ENCODE measurements at regions of chr11 and their contacts with region 1.

Region 1: DNA sequence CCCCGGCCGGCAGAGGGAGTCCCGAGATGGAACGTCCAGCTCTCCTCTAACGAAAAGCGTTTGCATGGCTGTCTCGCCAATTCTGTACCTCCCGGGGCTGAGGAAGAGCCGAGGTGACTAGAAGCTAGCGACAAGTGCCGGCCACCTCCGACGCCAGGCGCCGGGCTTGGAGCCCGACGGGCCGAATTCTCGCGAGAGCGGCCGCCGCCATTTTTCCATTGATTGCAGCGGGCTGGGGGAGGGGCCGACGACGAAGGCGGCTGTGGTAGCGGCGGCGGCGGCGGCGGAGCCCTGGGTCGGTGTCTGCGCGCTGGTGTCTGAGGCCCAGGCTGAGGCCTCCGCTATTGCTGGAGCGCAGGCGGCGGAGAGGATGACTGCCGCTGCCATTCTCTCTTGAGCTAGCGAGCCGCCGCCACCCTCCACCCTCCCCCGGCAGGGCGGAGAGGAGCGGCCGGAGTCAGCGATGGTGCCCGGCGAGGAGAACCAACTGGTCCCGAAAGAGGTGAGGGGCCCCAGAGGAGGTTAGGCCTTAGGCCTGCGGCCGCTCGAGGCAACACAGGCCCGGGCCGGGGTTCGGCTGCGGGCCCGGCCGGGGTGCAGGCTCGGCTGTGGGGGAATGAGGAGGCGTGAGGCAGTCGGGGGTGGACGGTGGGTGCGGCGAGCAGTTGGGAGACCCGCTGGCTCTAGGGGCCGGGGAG is at the start of gene USP47:
- DNase-seq: peak; percentile 90 to 98 (median 95)
- ATAC-seq: peak; percentile 90
- H3K4me3 ChIP-seq: peak within 1 kb of the TSS; percentile 76
- H3K4me3 Mint-ChIP-seq: peak within 1 kb of the TSS in 1 of 10 donors; percentile 59
- H3K27ac ChIP-seq: peak within 1 kb of the TSS; percentile 100
- H3K27ac Mint-ChIP-seq: peak within 1 kb of the TSS in 1 of 9 donors; percentile 64
- H3K4me1 ChIP-seq: peaks cover 27 to 36% of the 10 kb centered on the region in 2 donors
- H3K4me1 Mint-ChIP-seq: peaks cover 0 to 25% (median 3%) of the 10 kb centered on the region in 7 donors
- H3K27me3 ChIP-seq: no peaks in the 10 kb centered on the region
- H3K27me3 Mint-ChIP-seq: peaks cover 0 to 17% (median 13%) of the 10 kb centered on the region in 5 donors
- total RNA-seq, gene USP47: 45.6 to 71.8 (median 59.1) TPM

Region 2: DNA sequence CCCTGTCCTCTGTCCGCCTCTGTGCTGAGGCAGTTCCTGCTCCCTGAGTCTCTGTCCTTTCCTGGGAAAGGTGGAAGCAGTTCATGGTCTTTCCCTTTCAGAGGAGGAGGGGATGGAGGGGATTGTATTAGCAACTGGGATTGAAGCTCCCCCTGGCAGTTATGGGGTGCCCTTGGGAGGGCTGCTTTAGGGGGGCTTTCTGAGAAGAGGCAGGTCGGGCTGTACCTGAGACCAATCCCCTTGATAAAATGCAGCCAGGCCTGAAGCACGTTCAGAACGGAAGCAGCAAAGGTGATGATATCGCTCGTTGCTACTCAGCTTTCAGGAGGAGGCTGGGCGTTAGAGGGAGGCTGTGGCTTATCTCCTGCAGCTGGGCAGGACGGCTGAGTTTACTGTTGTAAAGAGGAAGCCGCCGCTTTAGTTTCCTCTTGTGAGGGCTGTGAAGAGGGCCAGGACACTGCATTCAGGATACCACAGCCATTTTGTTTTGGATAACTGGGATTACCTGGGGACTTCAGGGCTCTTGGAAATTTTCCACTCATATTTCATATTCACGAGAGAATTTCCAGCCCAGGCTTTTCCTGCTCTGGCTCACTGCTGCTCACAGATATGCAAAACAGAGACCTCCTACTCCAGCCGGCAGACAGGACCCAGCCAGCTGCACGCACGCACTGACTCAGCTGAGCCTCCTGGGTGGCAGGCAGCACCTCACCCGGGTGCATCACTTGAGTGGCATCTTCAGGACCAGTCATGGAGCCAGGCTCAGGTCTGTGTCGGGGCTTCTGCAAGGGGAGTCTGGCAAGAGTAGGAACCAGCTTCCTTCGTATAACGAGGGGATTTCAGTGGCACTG is 1386.0 kb before region 1 on chr11:
- CTCF ChIA-PET with region 1: no interaction called
- POLR2A ChIA-PET with region 1: no interaction called
- intact Hi-C with region 1: loop called (anchors 5 kb)
- DNase-seq: peak; percentile 45 to 85 (median 77)
- ATAC-seq: peak; percentile 71
- H3K4me3 ChIP-seq: peak overlapping the region; percentile 55
- H3K4me3 Mint-ChIP-seq: peak overlapping the region; percentile 78 to 96 (median 92)
- H3K27ac ChIP-seq: peak overlapping the region; percentile 75
- H3K27ac Mint-ChIP-seq: peak overlapping the region; percentile 87 to 98 (median 94)
- H3K4me1 ChIP-seq: peaks cover 62 to 67% of the 10 kb centered on the region in 2 donors
- H3K4me1 Mint-ChIP-seq: peaks cover 72 to 92% (median 90%) of the 10 kb centered on the region in 7 donors
- H3K27me3 ChIP-seq: no peaks in the 10 kb centered on the region
- H3K27me3 Mint-ChIP-seq: peaks cover 0 to 9% (median 0%) of the 10 kb centered on the region in 5 donors

Region 3: GRCh38 chr11:10857709-10858438 is 984.0 kb before region 1 on chr11 and contains the start of gene ZBED5:
- CTCF ChIA-PET with region 1: interaction called, 3 read pairs
- POLR2A ChIA-PET with region 1: interaction called, 6 read pairs
- intact Hi-C with region 1: loop called (anchors 1 to 2 kb)
- DNase-seq: peak; percentile 93 to 97 (median 96)
- ATAC-seq: peak; percentile 94
- H3K4me3 ChIP-seq: peak within 1 kb of the TSS; percentile 91
- H3K4me3 Mint-ChIP-seq: peak within 1 kb of the TSS; percentile 94 to 100 (median 99)
- H3K27ac ChIP-seq: peak within 1 kb of the TSS; percentile 91
- H3K27ac Mint-ChIP-seq: peak within 1 kb of the TSS; percentile 98 to 100 (median 100)
- H3K4me1 ChIP-seq: peaks cover 5 to 9% of the 10 kb centered on the region in 2 donors
- H3K4me1 Mint-ChIP-seq: peaks cover 20 to 73% (median 60%) of the 10 kb centered on the region in 7 donors
- H3K27me3 ChIP-seq: no peaks in the 10 kb centered on the region
- H3K27me3 Mint-ChIP-seq: peaks cover 0 to 2% (median 0%) of the 10 kb centered on the region in 5 donors
- total RNA-seq, gene ZBED5: 56.7 to 146 (median 94.0) TPM

Region 4: DNA sequence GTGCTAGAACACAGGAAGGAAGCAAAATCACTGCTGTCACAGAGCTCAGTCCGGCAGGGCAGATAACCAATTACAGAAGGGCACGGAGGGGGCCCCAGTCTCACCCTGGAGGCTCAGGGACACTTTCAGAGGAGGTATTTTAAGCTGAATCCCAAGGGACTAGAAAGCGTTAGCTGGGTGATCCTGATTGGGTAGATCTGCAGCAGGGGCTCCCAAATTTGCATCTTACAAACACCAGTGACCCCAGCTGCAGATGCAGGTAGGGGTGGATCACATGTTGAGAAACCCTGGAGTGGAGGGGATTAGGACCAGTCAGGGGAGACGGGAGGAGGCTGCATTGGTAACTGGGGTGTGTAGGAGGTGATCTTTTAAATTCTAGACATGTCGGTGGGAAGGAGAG is 580.2 kb before region 1 on chr11:
- CTCF ChIA-PET with region 1: no interaction called
- POLR2A ChIA-PET with region 1: no interaction called
- intact Hi-C with region 1: no loop called
- DNase-seq: no peak
- ATAC-seq: no peak
- H3K4me3 ChIP-seq: no peak overlapping the region
- H3K4me3 Mint-ChIP-seq: no peak overlapping the region
- H3K27ac ChIP-seq: no peak overlapping the region
- H3K27ac Mint-ChIP-seq: no peak overlapping the region
- H3K4me1 ChIP-seq: no peaks in the 10 kb centered on the region
- H3K4me1 Mint-ChIP-seq: peaks cover 0 to 3% (median 0%) of the 10 kb centered on the region in 7 donors
- H3K27me3 ChIP-seq: no peaks in the 10 kb centered on the region
- H3K27me3 Mint-ChIP-seq: peaks cover 10 to 21% (median 17%) of the 10 kb centered on the region in 5 donors

Region 5: GRCh38 chr11:11798586-11799438 is 43.1 kb before region 1 on chr11:
- CTCF ChIA-PET with region 1: interaction called, 12 read pairs
- POLR2A ChIA-PET with region 1: no interaction called
- intact Hi-C with region 1: no loop called
- DNase-seq: peak; percentile 41 to 79 (median 66)
- ATAC-seq: peak; percentile 79
- H3K4me3 ChIP-seq: no peak overlapping the region
- H3K4me3 Mint-ChIP-seq: no peak overlapping the region
- H3K27ac ChIP-seq: no peak overlapping the region
- H3K27ac Mint-ChIP-seq: no peak overlapping the region
- H3K4me1 ChIP-seq: no peaks in the 10 kb centered on the region
- H3K4me1 Mint-ChIP-seq: no peaks in the 10 kb centered on the region
- H3K27me3 ChIP-seq: peaks cover 0 to 3% of the 10 kb centered on the region in 2 donors
- H3K27me3 Mint-ChIP-seq: peaks cover 18 to 33% (median 24%) of the 10 kb centered on the region in 5 donors

Region 6: DNA sequence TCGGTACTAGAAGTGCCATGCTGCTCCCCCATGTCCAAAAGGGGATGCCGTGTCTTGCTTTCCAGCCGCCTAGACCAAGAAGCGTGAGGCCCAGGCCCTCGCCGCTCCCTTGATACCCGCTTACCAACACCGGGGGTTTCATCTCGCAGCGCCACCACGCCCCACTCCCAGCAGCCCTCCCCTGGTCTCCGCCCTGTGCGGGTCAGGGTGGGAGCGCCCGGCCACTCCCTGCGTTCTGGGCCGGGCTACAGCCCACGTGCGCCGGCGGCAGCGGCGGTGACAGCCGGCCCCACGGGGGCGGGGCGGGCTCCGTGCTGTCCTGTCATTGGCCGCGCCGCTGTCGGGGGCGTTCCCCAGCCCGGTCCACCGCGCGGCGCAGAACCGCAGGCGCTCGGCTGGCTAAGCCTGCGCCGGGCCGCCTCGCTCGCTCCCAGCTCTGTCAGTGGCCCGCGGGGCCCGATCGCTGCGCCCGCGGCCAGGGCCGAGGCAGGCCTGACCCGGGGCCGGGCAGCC is 268.4 kb after region 1 on chr11 and contains the start of gene MICAL2:
- CTCF ChIA-PET with region 1: no interaction called
- POLR2A ChIA-PET with region 1: no interaction called
- intact Hi-C with region 1: loop called (anchors 2 to 5 kb)
- DNase-seq: peak; percentile 66 to 94 (median 76)
- ATAC-seq: peak; percentile 99
- H3K4me3 ChIP-seq: peak within 1 kb of the TSS; percentile 58
- H3K4me3 Mint-ChIP-seq: peak within 1 kb of the TSS; percentile 72 to 92 (median 80)
- H3K27ac ChIP-seq: peak within 1 kb of the TSS; percentile 46
- H3K27ac Mint-ChIP-seq: peak within 1 kb of the TSS in 8 of 9 donors; percentile 15 to 96 (median 46)
- H3K4me1 ChIP-seq: peaks cover 0 to 21% of the 10 kb centered on the region in 2 donors
- H3K4me1 Mint-ChIP-seq: peaks cover 5 to 69% (median 12%) of the 10 kb centered on the region in 7 donors
- H3K27me3 ChIP-seq: no peaks in the 10 kb centered on the region
- H3K27me3 Mint-ChIP-seq: no peaks in the 10 kb centered on the region
- total RNA-seq, gene MICAL2: 5.8 to 112 (median 13.4) TPM

Region 7: GRCh38 chr11:13276832-13277767 is 1435.2 kb after region 1 on chr11:
- CTCF ChIA-PET with region 1: no interaction called
- POLR2A ChIA-PET with region 1: no interaction called
- intact Hi-C with region 1: loop called (anchors 5 kb)
- DNase-seq: peak; percentile 93 to 97 (median 96)
- ATAC-seq: peak; percentile 91
- H3K4me3 ChIP-seq: peak overlapping the region; percentile 80
- H3K4me3 Mint-ChIP-seq: peak overlapping the region; percentile 95 to 99 (median 97)
- H3K27ac ChIP-seq: peak overlapping the region; percentile 81
- H3K27ac Mint-ChIP-seq: peak overlapping the region; percentile 72 to 97 (median 91)
- H3K4me1 ChIP-seq: peaks cover 19 to 29% of the 10 kb centered on the region in 2 donors
- H3K4me1 Mint-ChIP-seq: peaks cover 32 to 47% (median 40%) of the 10 kb centered on the region in 7 donors
- H3K27me3 ChIP-seq: no peaks in the 10 kb centered on the region
- H3K27me3 Mint-ChIP-seq: peaks cover 0 to 51% (median 0%) of the 10 kb centered on the region in 5 donors